ENCODE measurements at regions of chr1 and their contacts with region 1.

Region 1: GRCh38 chr1:145845514-145846161 is at the start of gene NUDT17:
- DNase-seq: peak; percentile 71
- ATAC-seq: peak; percentile 69
- H3K4me3 Mint-ChIP-seq: no peak within 1 kb of the TSS
- H3K27ac Mint-ChIP-seq: no peak within 1 kb of the TSS
- H3K4me1 Mint-ChIP-seq: peaks cover 8% of the 10 kb centered on the region
- H3K27me3 Mint-ChIP-seq: no peaks in the 10 kb centered on the region
- CTCF ChIP-seq: peak; percentile 64
- total RNA-seq, gene NUDT17: 2.9 and 5.4 TPM in 2 replicates

Region 2: GRCh38 chr1:145777357-145778145 is 68.1 kb before region 1 on chr1:
- CTCF ChIA-PET with region 1: no interaction called
- POLR2A ChIA-PET with region 1: no interaction called
- intact Hi-C with region 1: no loop called
- DNase-seq: no peak
- ATAC-seq: no peak
- H3K4me3 Mint-ChIP-seq: no peak overlapping the region
- H3K27ac Mint-ChIP-seq: no peak overlapping the region
- H3K4me1 Mint-ChIP-seq: no peaks in the 10 kb centered on the region
- H3K27me3 Mint-ChIP-seq: no peaks in the 10 kb centered on the region
- CTCF ChIP-seq: no peak

Region 3: GRCh38 chr1:145871994-145872924 is 26.6 kb after region 1 on chr1:
- CTCF ChIA-PET with region 1: interaction called, 15 read pairs
- POLR2A ChIA-PET with region 1: interaction called, 10 read pairs
- intact Hi-C with region 1: no loop called
- DNase-seq: peak; percentile 45
- ATAC-seq: peak; percentile 81
- H3K4me3 Mint-ChIP-seq: peak overlapping the region; percentile 83
- H3K27ac Mint-ChIP-seq: no peak overlapping the region
- H3K4me1 Mint-ChIP-seq: peaks cover 11% of the 10 kb centered on the region
- H3K27me3 Mint-ChIP-seq: peaks cover 28% of the 10 kb centered on the region
- CTCF ChIP-seq: no peak

Region 4: DNA sequence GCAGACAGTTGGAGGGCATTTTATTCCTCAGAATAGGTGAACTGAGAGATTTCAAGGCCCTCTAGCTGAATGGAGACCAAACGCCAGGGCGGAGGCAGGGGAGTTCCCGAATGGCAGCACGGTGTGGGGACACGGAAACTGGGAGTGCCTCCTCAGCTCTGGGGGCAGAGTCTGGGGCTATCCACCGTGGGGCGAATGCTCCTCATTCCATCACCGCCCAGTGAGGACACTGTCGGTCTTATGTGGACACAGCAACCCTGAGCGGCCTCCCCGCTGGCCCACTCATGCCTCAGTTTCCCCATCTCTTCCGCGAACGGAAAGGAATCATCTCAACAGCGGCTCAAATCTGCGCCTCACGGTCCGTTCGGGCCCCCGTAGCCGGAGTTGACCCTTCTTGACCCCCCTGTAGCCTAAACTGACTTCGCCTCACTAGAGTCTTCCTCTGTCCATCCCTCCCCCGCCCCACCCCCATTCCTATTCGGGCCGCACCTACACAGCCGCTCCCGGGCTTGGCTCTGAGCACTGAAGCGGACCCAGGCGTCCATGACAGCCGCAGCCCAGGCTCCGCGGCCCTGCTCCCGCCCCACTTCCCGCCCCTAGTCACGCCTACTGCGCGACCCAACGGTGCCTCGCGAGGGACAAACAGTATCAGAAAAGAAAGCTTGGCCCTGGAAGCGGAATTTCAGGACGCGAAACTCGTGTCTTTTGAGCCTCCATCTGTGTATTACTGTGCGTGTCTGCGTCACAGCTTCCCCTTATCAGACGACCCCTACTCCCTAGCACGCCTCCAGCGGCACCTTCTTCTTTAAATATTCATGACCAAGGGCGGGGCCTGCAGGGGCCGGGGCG is 72.7 kb after region 1 on chr1 and contains the start of gene PEX11B:
- CTCF ChIA-PET with region 1: interaction called, 8 read pairs
- POLR2A ChIA-PET with region 1: interaction called, 17 read pairs
- intact Hi-C with region 1: no loop called
- DNase-seq: peak; percentile 88
- ATAC-seq: peak; percentile 90
- H3K4me3 Mint-ChIP-seq: peak within 1 kb of the TSS; percentile 95
- H3K27ac Mint-ChIP-seq: peak within 1 kb of the TSS; percentile 93
- H3K4me1 Mint-ChIP-seq: peaks cover 35% of the 10 kb centered on the region
- H3K27me3 Mint-ChIP-seq: no peaks in the 10 kb centered on the region
- CTCF ChIP-seq: no peak
- total RNA-seq, gene PEX11B: 42.7 and 47.7 TPM in 2 replicates

Region 5: DNA sequence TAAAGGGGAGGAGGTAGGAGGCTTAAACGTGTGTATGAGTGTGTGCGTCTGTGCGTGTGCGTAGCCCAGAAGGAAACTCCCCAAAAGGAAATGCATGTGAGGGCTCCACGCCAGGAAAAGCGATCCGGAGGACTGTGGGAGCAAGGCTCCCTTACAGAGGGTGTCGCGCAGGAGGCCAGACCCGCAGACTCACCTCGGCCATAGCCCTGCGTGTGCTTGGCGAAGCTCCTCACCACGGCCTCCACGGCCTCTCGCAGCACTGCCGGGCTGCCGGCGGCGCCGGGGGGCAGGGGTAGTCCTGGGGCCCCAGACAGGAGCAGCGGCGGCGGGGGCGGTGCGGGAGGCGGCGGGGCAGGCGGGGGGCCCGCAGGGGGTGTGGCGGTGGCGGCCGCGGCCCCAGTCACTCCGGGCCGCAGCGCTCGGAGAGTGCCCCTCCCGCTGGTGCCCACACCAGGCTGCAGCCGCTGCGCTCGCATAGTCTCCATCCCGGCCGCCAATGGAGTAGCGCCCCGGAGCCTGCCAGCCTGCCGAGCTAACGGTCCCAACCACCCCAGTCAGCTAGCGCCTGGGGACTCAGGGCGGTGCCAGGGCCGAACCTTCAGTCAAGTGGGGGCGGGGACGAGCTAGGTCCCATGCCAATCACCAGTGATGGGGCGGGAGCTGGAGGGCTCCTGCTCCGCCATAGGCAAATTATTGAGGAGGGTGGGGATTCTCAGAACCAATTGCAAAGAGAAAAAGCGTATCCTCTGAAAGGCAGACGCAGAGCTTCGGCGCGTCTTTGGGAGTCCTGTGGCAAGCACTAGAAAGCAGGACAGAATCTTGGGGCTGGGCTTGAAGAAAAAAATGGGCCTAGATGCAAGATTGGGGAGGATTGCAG is 112.0 kb after region 1 on chr1 and contains the start of gene LIX1L:
- CTCF ChIA-PET with region 1: interaction called, 8 read pairs
- POLR2A ChIA-PET with region 1: interaction called, 17 read pairs
- intact Hi-C with region 1: no loop called
- DNase-seq: peak; percentile 87
- ATAC-seq: peak; percentile 89
- H3K4me3 Mint-ChIP-seq: peak within 1 kb of the TSS; percentile 96
- H3K27ac Mint-ChIP-seq: peak within 1 kb of the TSS; percentile 94
- H3K4me1 Mint-ChIP-seq: peaks cover 64% of the 10 kb centered on the region
- H3K27me3 Mint-ChIP-seq: no peaks in the 10 kb centered on the region
- CTCF ChIP-seq: no peak
- total RNA-seq, gene LIX1L: 30.1 and 31.7 TPM in 2 replicates

Region 6: GRCh38 chr1:146007506-146008133 is 162.0 kb after region 1 on chr1:
- CTCF ChIA-PET with region 1: interaction called, 16 read pairs
- POLR2A ChIA-PET with region 1: interaction called, 10 read pairs
- intact Hi-C with region 1: no loop called
- DNase-seq: no peak
- ATAC-seq: no peak
- H3K4me3 Mint-ChIP-seq: no peak overlapping the region
- H3K27ac Mint-ChIP-seq: peak overlapping the region; percentile 96
- H3K4me1 Mint-ChIP-seq: peaks cover 26% of the 10 kb centered on the region
- H3K27me3 Mint-ChIP-seq: no peaks in the 10 kb centered on the region
- CTCF ChIP-seq: no peak

Region 7: DNA sequence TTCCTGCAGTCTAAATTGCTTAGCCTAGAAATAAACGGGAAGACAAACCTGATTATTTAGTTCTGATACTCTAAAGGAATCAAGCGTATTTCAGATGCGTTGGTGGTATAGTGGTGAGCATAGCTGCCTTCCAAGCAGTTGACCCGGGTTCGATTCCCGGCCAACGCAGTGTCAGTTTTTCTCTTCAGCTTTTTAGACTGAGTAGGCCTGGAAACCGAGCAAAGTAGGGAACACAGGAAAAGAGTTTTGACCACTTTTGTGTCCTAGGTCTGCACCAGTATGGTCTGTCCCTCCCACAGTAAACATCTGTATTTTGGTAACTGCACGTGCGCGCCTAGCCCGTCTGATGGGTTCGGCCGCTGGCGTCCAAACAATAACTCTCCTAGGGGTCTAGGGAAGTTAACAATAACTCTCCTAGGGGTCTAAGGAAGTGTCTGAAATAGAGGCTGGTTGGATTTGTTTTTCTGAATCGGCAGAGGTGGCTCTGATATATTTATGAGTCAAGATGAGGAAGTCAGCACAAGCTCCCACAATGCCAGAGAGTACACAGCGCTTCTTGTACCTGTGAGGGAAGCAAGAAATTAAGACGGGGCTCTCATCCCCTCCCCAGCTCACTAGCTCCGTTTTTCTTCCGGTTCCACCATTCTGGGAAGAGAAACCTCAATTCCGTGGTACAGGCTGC is 191.5 kb after region 1 on chr1:
- CTCF ChIA-PET with region 1: interaction called, 11 read pairs
- POLR2A ChIA-PET with region 1: interaction called, 7 read pairs
- intact Hi-C with region 1: no loop called
- DNase-seq: peak; percentile 61
- ATAC-seq: peak; percentile 56
- H3K4me3 Mint-ChIP-seq: peak overlapping the region; percentile 99
- H3K27ac Mint-ChIP-seq: peak overlapping the region; percentile 98
- H3K4me1 Mint-ChIP-seq: peaks cover 43% of the 10 kb centered on the region
- H3K27me3 Mint-ChIP-seq: peaks cover 2% of the 10 kb centered on the region
- CTCF ChIP-seq: no peak

Measured in activated B cell treated with CpG ODN at 0.5 μM for 24 hours (primary cell).